Panc1 (cell line): ENCODE measurements at regions of chr3 and their contacts with region 1.

Region 1: DNA sequence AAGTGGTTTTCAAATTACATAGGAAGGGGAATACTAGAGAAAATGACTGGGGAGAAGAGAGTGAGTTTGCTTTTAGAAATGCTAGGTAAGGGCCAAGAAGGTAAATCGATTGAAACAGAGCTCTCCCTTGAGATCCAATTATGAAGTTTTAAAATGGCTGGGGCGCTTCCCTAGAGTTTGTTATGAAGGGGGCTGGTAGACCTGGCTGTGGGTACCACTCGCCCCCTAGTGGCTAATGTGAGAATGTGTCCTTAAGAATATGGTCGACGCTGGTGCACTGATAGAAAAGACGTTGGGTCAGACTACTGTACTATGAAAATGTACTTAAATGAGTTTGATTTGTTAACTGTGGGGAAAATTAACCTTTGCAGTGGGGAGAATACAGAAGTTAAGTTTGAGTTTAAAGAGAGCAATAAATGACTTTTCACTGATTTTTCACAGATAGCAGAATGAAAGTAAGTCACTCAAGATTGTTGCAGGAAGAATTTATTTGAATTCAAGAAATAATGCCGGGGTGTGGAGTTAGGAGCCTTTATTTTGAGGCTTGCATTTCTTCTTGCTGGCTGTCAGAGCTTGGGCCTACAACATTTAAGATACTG is 9.2 kb downstream of the TMPRSS7 start:
- DNase-seq: peak; percentile 51
- ATAC-seq: peak; percentile 98
- H3K4me3 ChIP-seq: no peak overlapping the region
- H3K27ac ChIP-seq: no peak overlapping the region
- H3K4me1 ChIP-seq: peaks cover 5% of the 10 kb centered on the region; the same call in 1 of the 2 replicates
- H3K27me3 ChIP-seq: peaks cover 16% of the 10 kb centered on the region
- CTCF ChIP-seq: peak; percentile 97

Region 2: GRCh38 chr3:111595232-111595631 is 448.5 kb before region 1 on chr3 and contains the start of gene ZBED2:
- CTCF ChIA-PET with region 1: no interaction called
- POLR2A ChIA-PET with region 1: no interaction called
- in situ Hi-C with region 1: no loop called
- intact Hi-C with region 1: no loop called
- DNase-seq: no peak
- ATAC-seq: no peak
- H3K4me3 ChIP-seq: no peak within 1 kb of the TSS
- H3K27ac ChIP-seq: no peak within 1 kb of the TSS
- H3K4me1 ChIP-seq: no peaks in the 10 kb centered on the region
- H3K27me3 ChIP-seq: no peaks in the 10 kb centered on the region
- CTCF ChIP-seq: no peak
- total RNA-seq, gene ZBED2: 0.10 TPM

Region 3: GRCh38 chr3:111978493-111979433 is 64.9 kb before region 1 on chr3 and contains the start of gene ABHD10:
- CTCF ChIA-PET with region 1: interaction called, 11 read pairs
- POLR2A ChIA-PET with region 1: no interaction called
- in situ Hi-C with region 1: no loop called
- intact Hi-C with region 1: no loop called
- DNase-seq: peak; percentile 94
- ATAC-seq: peak; percentile 99
- H3K4me3 ChIP-seq: peak within 1 kb of the TSS; percentile 74 to 88
- H3K27ac ChIP-seq: peak within 1 kb of the TSS; percentile 87
- H3K4me1 ChIP-seq: peaks cover 11% of the 10 kb centered on the region; the same call in 1 of the 2 replicates
- H3K27me3 ChIP-seq: peaks cover 10% of the 10 kb centered on the region; the same call in 1 of the 2 replicates
- CTCF ChIP-seq: no peak
- total RNA-seq, gene ABHD10: 30.3 TPM